ENCODE measurements at regions of chr14 and their contacts with region 1.

Region 1: GRCh38 chr14:70665191-70665916 is 23.6 kb downstream of the TTC9 start:
- DNase-seq: no peak
- ATAC-seq: no peak
- H3K4me3 ChIP-seq: no peak overlapping the region
- H3K4me3 Mint-ChIP-seq: peak overlapping the region; percentile 60
- H3K27ac ChIP-seq: peak overlapping the region in 1 of 2 donors; percentile 6
- H3K27ac Mint-ChIP-seq: peak overlapping the region; percentile 88
- H3K4me1 ChIP-seq: peaks cover 56% of the 10 kb centered on the region
- H3K4me1 Mint-ChIP-seq: peaks cover 66% of the 10 kb centered on the region
- H3K27me3 ChIP-seq: no peaks in the 10 kb centered on the region
- H3K27me3 Mint-ChIP-seq: no peaks in the 10 kb centered on the region
- CTCF ChIP-seq: no peak

Region 2: DNA sequence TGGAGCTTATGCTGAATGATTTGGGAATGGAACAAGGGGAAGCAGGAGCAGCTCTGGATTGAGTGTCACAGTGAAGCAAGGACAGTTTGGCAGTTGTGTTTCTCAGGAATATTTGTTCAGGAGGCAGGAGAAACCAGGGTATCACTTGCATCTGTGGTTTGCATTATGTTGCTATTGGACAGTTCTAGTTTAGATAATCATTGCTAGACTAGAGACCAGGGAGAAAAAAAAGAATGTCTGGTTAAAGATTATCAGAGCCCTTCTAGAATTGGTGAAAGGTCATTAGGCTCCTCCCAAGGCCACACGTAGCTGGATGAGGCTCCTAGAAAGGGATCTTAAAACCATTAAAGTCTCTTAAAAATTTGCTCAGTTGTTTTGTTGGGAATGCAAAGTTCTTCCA is 915.4 kb before region 1 on chr14:
- CTCF ChIA-PET with region 1: no interaction called
- POLR2A ChIA-PET with region 1: no interaction called
- intact Hi-C with region 1: no loop called
- DNase-seq: no peak
- ATAC-seq: no peak
- H3K4me3 ChIP-seq: no peak overlapping the region
- H3K4me3 Mint-ChIP-seq: no peak overlapping the region
- H3K27ac ChIP-seq: no peak overlapping the region
- H3K27ac Mint-ChIP-seq: no peak overlapping the region
- H3K4me1 ChIP-seq: peaks cover 4% of the 10 kb centered on the region
- H3K4me1 Mint-ChIP-seq: peaks cover 7% of the 10 kb centered on the region
- H3K27me3 ChIP-seq: no peaks in the 10 kb centered on the region
- H3K27me3 Mint-ChIP-seq: no peaks in the 10 kb centered on the region
- CTCF ChIP-seq: no peak

Region 3: DNA sequence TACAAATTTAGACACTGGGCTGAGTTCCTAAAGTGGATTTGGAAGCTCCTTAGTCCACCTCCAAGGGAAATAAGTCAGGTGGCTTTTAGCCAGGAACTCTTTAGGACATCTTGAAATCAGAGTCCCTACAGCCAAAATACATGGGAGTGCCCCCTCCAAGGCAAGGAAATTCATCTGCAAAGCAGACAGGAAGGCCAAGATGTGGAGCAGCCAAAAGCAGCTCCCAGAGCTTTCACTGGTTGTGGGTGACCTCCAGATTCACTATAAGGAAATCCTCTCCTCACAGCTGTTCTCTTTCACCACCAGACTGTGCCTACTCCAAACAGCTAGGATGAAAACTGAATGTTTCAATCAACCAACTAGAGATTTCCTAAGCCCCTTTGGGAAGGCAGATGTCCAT is 17.0 kb before region 1 on chr14:
- CTCF ChIA-PET with region 1: interaction called, 18 read pairs
- POLR2A ChIA-PET with region 1: interaction called, 182 read pairs
- intact Hi-C with region 1: loop called in 1 of 2 experiments (anchors 2 kb)
- DNase-seq: no peak
- ATAC-seq: no peak
- H3K4me3 ChIP-seq: no peak overlapping the region
- H3K4me3 Mint-ChIP-seq: peak overlapping the region; percentile 21
- H3K27ac ChIP-seq: peak overlapping the region; percentile 7 to 22
- H3K27ac Mint-ChIP-seq: peak overlapping the region; percentile 95
- H3K4me1 ChIP-seq: peaks cover 68% of the 10 kb centered on the region
- H3K4me1 Mint-ChIP-seq: peaks cover 94% of the 10 kb centered on the region
- H3K27me3 ChIP-seq: no peaks in the 10 kb centered on the region
- H3K27me3 Mint-ChIP-seq: no peaks in the 10 kb centered on the region
- CTCF ChIP-seq: no peak

Region 4: DNA sequence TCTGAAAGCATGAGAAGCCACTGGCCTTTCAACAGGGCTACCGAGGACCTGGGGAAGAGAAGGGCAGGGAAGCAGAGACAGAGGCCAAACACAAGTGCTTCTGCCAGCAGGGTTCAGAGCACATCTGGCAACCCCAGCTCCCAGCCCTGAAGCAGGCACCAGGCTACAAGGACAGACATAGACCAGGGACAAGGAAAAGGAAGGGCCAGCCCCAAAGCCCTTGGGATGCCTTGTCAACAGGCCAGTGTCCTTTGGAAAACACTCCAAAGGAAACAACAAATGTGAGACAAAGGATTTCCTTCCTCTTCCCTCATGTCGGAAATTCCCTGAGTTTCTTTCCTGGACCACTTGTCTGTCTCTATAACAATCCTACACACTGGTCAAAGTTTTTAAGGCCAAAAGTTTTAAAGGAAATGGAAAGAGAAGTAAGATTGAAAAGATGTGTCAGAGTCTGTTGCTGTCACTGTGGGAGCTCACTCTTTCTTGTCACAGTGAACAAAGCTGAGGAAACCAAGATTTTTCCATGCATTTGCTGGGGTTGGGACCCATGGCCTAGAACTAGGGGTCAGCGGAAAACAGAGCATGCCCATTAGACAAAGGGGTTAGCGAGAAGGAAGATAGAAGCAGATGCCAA is 35.7 kb after region 1 on chr14:
- CTCF ChIA-PET with region 1: interaction called, 3 read pairs
- POLR2A ChIA-PET with region 1: no interaction called
- intact Hi-C with region 1: loop called in 1 of 2 experiments (anchors 5 kb)
- DNase-seq: no peak
- ATAC-seq: no peak
- H3K4me3 ChIP-seq: no peak overlapping the region
- H3K4me3 Mint-ChIP-seq: no peak overlapping the region
- H3K27ac ChIP-seq: no peak overlapping the region
- H3K27ac Mint-ChIP-seq: no peak overlapping the region
- H3K4me1 ChIP-seq: no peaks in the 10 kb centered on the region
- H3K4me1 Mint-ChIP-seq: no peaks in the 10 kb centered on the region
- H3K27me3 ChIP-seq: no peaks in the 10 kb centered on the region
- H3K27me3 Mint-ChIP-seq: no peaks in the 10 kb centered on the region
- CTCF ChIP-seq: no peak

Region 5: DNA sequence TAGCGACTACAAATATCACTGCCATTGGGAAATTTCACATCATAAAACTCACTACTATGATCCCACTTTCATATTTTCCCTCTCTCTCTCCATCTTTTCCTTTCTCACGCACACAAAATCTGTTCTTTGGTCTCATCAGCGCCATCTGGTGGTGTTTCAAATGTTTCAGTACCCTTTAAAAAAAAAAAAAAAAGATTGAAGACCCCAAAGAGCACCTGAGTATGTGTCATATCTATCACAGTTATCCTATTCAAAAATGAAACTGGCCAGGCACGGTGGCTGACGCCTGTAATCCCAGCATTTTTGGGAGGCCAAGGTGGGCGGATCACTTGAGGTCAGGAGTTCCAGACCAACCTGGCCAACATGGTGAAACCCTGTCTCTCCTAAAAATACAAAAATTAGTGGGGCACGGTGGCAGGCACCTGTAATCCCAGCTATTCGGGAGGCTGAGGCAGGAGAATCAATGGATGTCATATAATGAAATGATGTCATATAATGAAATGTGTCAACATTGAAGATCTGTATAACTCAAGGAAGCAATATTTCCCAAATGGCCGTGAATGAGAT is 48.8 kb after region 1 on chr14:
- CTCF ChIA-PET with region 1: no interaction called
- POLR2A ChIA-PET with region 1: no interaction called
- intact Hi-C with region 1: loop called in 1 of 2 experiments (anchors 2 kb)
- DNase-seq: peak in 12 of 14 experiments; percentile 12 to 84 (median 36)
- ATAC-seq: no peak
- H3K4me3 ChIP-seq: no peak overlapping the region
- H3K4me3 Mint-ChIP-seq: no peak overlapping the region
- H3K27ac ChIP-seq: no peak overlapping the region
- H3K27ac Mint-ChIP-seq: no peak overlapping the region
- H3K4me1 ChIP-seq: peaks cover 5% of the 10 kb centered on the region
- H3K4me1 Mint-ChIP-seq: peaks cover 5% of the 10 kb centered on the region
- H3K27me3 ChIP-seq: no peaks in the 10 kb centered on the region
- H3K27me3 Mint-ChIP-seq: no peaks in the 10 kb centered on the region
- CTCF ChIP-seq: peak; percentile 95

Region 6: GRCh38 chr14:70744641-70745040 is 79.3 kb after region 1 on chr14:
- CTCF ChIA-PET with region 1: no interaction called
- POLR2A ChIA-PET with region 1: no interaction called
- intact Hi-C with region 1: no loop called
- DNase-seq: no peak
- ATAC-seq: no peak
- H3K4me3 ChIP-seq: no peak overlapping the region
- H3K4me3 Mint-ChIP-seq: no peak overlapping the region
- H3K27ac ChIP-seq: no peak overlapping the region
- H3K27ac Mint-ChIP-seq: no peak overlapping the region
- H3K4me1 ChIP-seq: no peaks in the 10 kb centered on the region
- H3K4me1 Mint-ChIP-seq: no peaks in the 10 kb centered on the region
- H3K27me3 ChIP-seq: no peaks in the 10 kb centered on the region
- H3K27me3 Mint-ChIP-seq: no peaks in the 10 kb centered on the region
- CTCF ChIP-seq: no peak

Measured in CD4-positive, alpha-beta T cell (primary cell).